Endothelial cell of umbilical vein (primary cell): ENCODE measurements at regions of chr15 and their contacts with region 1.

Region 1: DNA sequence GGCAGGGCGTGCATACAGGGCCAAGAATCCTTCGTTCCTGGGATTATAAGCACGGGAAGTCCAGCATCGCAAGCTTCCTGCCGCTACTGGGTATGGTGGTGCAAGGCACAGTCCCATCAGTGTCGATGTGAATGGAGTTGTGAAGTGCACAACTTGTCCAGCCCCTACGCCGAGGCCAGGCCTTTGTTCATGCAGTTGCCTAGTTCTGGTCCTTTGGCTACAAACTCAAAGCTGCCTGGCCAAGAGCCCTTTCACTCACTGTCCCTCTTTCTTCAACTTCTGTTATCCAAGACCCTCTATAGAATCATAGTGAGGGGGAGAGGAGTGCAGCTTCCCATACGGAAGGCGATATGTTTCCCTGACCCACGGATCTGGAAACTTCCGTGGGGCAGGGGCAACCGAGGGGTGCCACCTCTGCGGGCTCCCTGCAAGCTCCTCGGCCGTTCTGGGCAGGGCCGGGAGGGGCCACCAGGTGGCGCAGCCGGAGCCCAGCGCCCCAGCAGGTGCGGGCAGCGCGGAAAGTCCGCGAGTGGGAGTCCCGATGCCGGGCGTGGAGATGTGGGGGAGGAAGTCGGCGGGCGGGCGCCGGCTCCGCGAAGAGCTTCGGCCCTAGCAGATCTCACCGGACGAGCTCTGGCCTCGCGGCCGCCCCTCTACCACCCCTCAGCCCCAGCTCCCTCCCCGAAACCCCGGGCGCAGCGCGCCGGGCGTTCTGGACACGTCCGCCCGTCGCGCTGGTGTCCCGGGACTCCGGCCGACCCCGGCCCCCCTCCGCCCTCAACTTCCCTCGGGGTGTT is 693 bp downstream of the RASGRP1 start:
- DNase-seq: peak; percentile 48
- H3K4me3 ChIP-seq: peak overlapping the region; percentile 15 to 61 (median 44)
- H3K27ac ChIP-seq: no peak overlapping the region
- H3K4me1 ChIP-seq: no peaks in the 10 kb centered on the region
- H3K27me3 ChIP-seq: peaks cover 34 to 54% of the 10 kb centered on the region in 2 experiments
- CTCF ChIP-seq: peak; percentile 83 to 95
- POLR2A ChIP-seq: no peak

Region 2: GRCh38 chr15:37995461-37996347 is 568.2 kb before region 1 on chr15:
- CTCF ChIA-PET with region 1: interaction called, 17 read pairs
- POLR2A ChIA-PET with region 1: no interaction called
- dilution Hi-C with region 1: no loop called
- intact Hi-C with region 1: no loop called
- DNase-seq: peak; percentile 58
- H3K4me3 ChIP-seq: no peak overlapping the region
- H3K27ac ChIP-seq: no peak overlapping the region
- H3K4me1 ChIP-seq: no peaks in the 10 kb centered on the region
- H3K27me3 ChIP-seq: peaks cover 19 to 49% of the 10 kb centered on the region in 2 experiments
- CTCF ChIP-seq: peak; percentile 43 to 46
- POLR2A ChIP-seq: no peak

Region 3: GRCh38 chr15:38367476-38367875 is 196.4 kb before region 1 on chr15:
- CTCF ChIA-PET with region 1: no interaction called
- POLR2A ChIA-PET with region 1: no interaction called
- dilution Hi-C with region 1: no loop called
- intact Hi-C with region 1: no loop called
- DNase-seq: no peak
- H3K4me3 ChIP-seq: no peak overlapping the region
- H3K27ac ChIP-seq: no peak overlapping the region
- H3K4me1 ChIP-seq: no peaks in the 10 kb centered on the region
- H3K27me3 ChIP-seq: peaks cover 21 to 28% of the 10 kb centered on the region in 2 experiments
- CTCF ChIP-seq: no peak
- POLR2A ChIP-seq: no peak

Region 4: DNA sequence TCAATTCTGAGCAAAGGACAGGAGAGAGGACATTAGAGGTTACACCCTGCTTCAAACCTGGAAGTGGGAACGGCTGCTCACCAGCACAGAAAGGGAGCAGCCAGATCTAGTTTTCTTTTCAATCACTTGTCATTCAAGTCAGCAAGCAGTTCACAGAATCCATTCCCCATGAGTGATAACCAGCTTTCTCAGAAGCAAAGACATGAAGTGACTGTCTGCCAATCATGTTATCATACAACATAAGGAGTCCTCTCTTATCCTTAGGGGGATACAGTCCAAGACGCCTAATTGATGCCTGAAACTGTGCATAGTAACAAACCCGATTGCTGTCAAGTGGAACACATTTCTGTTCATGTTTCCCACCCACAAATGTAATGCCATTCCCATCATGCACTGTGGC is 55.3 kb before region 1 on chr15:
- CTCF ChIA-PET with region 1: interaction called, 19 read pairs
- POLR2A ChIA-PET with region 1: no interaction called
- dilution Hi-C with region 1: no loop called
- intact Hi-C with region 1: no loop called
- DNase-seq: no peak
- H3K4me3 ChIP-seq: no peak overlapping the region
- H3K27ac ChIP-seq: no peak overlapping the region
- H3K4me1 ChIP-seq: no peaks in the 10 kb centered on the region
- H3K27me3 ChIP-seq: peaks cover 5 to 9% of the 10 kb centered on the region in 2 experiments
- CTCF ChIP-seq: no peak
- POLR2A ChIP-seq: no peak

Region 5: DNA sequence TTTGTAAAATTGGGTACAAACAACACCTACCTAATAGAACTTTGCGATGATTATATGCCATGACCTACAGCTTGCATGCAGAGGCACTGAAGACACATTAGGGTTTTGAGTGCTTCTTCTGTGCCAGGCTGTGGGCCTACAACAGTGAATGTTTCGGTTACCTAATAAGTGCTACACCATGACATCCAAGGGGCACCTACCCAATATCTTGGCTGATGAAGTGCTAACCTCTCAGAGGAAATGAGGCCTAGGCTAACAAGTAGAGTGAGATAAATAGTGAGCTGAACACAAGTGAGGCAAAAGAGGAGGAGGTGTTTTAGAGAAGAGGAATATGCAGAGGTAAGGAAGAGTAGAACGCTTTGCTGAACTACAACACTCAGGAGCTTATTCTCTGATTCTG is 12.9 kb after region 1 on chr15:
- CTCF ChIA-PET with region 1: interaction called, 19 read pairs
- POLR2A ChIA-PET with region 1: no interaction called
- dilution Hi-C with region 1: no loop called
- intact Hi-C with region 1: no loop called
- DNase-seq: no peak
- H3K4me3 ChIP-seq: no peak overlapping the region
- H3K27ac ChIP-seq: no peak overlapping the region
- H3K4me1 ChIP-seq: no peaks in the 10 kb centered on the region
- H3K27me3 ChIP-seq: peaks cover 6 to 8% of the 10 kb centered on the region in 2 experiments
- CTCF ChIP-seq: no peak
- POLR2A ChIP-seq: no peak

Region 6: DNA sequence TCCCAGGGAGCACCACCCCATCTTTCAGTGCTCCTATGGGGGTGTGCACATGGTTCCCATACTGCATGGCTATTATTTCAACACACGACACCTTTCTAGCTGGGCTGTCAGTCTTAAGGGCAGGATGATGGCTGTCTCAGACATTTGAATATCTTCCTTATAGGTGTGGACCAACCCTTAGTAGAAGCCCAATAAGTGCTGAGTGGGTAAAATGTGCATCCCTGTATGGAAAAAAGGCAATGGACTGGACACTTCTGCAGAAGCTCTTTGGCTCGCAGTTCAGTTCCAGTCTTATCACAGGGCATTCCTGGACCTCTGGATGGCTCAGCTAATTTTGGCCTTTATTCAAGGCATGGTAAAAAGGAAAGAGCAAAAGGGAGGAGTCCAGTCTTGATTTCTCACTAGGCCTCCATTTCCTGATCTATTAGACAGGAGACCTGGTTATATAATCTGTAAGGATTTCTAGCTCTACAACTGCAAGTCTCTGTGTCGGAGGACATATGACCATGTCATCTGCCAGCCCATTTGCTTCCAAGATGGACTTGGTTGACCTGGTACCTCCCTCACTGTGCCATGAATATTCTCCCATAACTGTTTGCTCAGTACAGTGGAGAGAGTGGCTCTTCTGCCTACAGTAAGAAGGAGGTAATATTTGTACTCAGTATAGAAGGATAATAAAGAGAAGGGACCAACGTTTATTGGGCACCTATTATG is 54.5 kb after region 1 on chr15:
- CTCF ChIA-PET with region 1: interaction called, 13 read pairs
- POLR2A ChIA-PET with region 1: no interaction called
- dilution Hi-C with region 1: no loop called
- intact Hi-C with region 1: no loop called
- DNase-seq: no peak
- H3K4me3 ChIP-seq: no peak overlapping the region
- H3K27ac ChIP-seq: no peak overlapping the region
- H3K4me1 ChIP-seq: no peaks in the 10 kb centered on the region
- H3K27me3 ChIP-seq: peaks cover 6 to 14% of the 10 kb centered on the region in 2 experiments
- CTCF ChIP-seq: no peak
- POLR2A ChIP-seq: no peak

Region 7: GRCh38 chr15:38660738-38661137 is 96.8 kb after region 1 on chr15:
- CTCF ChIA-PET with region 1: interaction called, 12 read pairs
- POLR2A ChIA-PET with region 1: no interaction called
- dilution Hi-C with region 1: no loop called
- intact Hi-C with region 1: no loop called
- DNase-seq: no peak
- H3K4me3 ChIP-seq: no peak overlapping the region
- H3K27ac ChIP-seq: no peak overlapping the region
- H3K4me1 ChIP-seq: no peaks in the 10 kb centered on the region
- H3K27me3 ChIP-seq: peaks cover 16 to 18% of the 10 kb centered on the region in 2 experiments
- CTCF ChIP-seq: no peak
- POLR2A ChIP-seq: no peak